ENCODE measurements at regions of chr17 and their contacts with region 1.

Region 1: DNA sequence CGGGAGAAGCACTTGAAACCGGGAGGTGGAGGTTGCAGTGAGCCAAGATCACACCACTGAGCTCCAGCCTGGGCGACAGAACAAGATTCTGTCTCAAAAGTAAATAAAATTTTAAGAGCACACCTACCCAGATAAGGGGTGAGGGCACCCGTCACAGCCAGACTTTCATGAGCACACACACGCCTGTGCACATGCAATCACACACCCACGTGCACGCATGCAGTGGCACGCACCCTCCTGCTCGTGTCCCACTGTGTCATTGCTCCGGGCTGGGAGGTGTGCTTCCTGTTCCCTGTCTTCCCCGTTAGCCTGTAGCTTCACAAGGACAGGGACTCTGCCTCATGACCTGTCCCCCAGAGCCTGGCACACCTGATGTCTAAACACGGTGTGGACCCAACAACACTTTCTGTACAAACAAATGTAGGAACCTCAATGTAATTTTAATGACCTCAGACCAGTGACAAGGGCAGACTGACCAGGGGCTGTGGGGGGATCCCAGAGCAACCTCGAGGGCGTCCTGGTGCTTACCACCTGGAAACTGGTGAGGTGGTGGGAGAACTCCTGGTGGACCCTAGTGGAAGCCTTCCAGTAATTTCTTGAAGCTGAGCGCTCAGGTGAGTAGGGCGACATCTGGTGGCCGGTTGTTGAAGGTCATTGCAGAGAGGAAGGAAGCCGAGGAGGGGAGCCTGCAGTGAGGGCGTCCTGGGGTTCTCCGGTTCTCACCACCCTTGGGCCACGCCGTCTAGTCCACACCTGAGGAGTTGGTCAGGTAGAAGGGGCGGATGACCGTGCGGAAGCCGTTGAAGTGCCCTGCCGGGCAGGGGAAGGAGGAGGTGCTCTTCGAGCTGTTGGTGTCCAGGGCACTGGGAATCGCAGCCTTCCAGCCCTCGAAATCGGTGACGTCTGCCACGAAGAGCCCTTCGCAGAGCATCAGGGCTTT is 8.6 kb downstream of the LGALS3BP start:
- DNase-seq: peak; percentile 89 to 94
- ATAC-seq: peak; percentile 71
- H3K4me3 ChIP-seq: no peak overlapping the region
- H3K27ac ChIP-seq: no peak overlapping the region
- H3K4me1 ChIP-seq: no peaks in the 10 kb centered on the region
- H3K27me3 ChIP-seq: no peaks in the 10 kb centered on the region

Region 2: GRCh38 chr17:78865682-78866390 is 105.3 kb before region 1 on chr17:
- intact Hi-C with region 1: loop called (anchors 1 to 5 kb)
- DNase-seq: peak; percentile 87 to 92
- ATAC-seq: peak; percentile 69
- H3K4me3 ChIP-seq: no peak overlapping the region
- H3K27ac ChIP-seq: no peak overlapping the region
- H3K4me1 ChIP-seq: no peaks in the 10 kb centered on the region
- H3K27me3 ChIP-seq: no peaks in the 10 kb centered on the region

Region 3: GRCh38 chr17:78883164-78884122 is 87.7 kb before region 1 on chr17:
- intact Hi-C with region 1: loop called in 1 of 2 experiments (anchors 5 kb)
- DNase-seq: peak; percentile 91 to 93
- ATAC-seq: peak; percentile 83
- H3K4me3 ChIP-seq: no peak overlapping the region
- H3K27ac ChIP-seq: peak overlapping the region; percentile 3 to 89
- H3K4me1 ChIP-seq: no peaks in the 10 kb centered on the region
- H3K27me3 ChIP-seq: no peaks in the 10 kb centered on the region

Region 4: GRCh38 chr17:78923660-78924453 is 47.2 kb before region 1 on chr17:
- intact Hi-C with region 1: loop called in 1 of 2 experiments (anchors 5 kb)
- DNase-seq: peak; percentile 80 to 88
- ATAC-seq: no peak
- H3K4me3 ChIP-seq: peak overlapping the region; percentile 91
- H3K27ac ChIP-seq: peak overlapping the region in 1 of 2 donors; percentile 71
- H3K4me1 ChIP-seq: peaks cover 2 to 5% of the 10 kb centered on the region in 2 donors
- H3K27me3 ChIP-seq: no peaks in the 10 kb centered on the region

Region 5: GRCh38 chr17:78935379-78936323 is 35.5 kb before region 1 on chr17:
- intact Hi-C with region 1: loop called in 1 of 2 experiments (anchors 5 kb)
- DNase-seq: peak; percentile 85 to 90
- ATAC-seq: peak; percentile 58
- H3K4me3 ChIP-seq: no peak overlapping the region
- H3K27ac ChIP-seq: peak overlapping the region; percentile 90 to 94
- H3K4me1 ChIP-seq: no peaks in the 10 kb centered on the region
- H3K27me3 ChIP-seq: no peaks in the 10 kb centered on the region